Endothelial cell of umbilical vein (primary cell): ENCODE measurements at regions of chr1 and their contacts with region 1.

Region 1: GRCh38 chr1:160098852-160099561 is 588 bp upstream of the IGSF8 start:
- DNase-seq: peak; percentile 91
- H3K4me3 ChIP-seq: peak overlapping the region; percentile 63 to 82 (median 79)
- H3K27ac ChIP-seq: peak overlapping the region; percentile 36
- H3K4me1 ChIP-seq: peaks cover 7% of the 10 kb centered on the region
- H3K27me3 ChIP-seq: peaks cover 14 to 16% of the 10 kb centered on the region in 2 experiments
- CTCF ChIP-seq: no peak
- POLR2A ChIP-seq: no peak

Region 2: DNA sequence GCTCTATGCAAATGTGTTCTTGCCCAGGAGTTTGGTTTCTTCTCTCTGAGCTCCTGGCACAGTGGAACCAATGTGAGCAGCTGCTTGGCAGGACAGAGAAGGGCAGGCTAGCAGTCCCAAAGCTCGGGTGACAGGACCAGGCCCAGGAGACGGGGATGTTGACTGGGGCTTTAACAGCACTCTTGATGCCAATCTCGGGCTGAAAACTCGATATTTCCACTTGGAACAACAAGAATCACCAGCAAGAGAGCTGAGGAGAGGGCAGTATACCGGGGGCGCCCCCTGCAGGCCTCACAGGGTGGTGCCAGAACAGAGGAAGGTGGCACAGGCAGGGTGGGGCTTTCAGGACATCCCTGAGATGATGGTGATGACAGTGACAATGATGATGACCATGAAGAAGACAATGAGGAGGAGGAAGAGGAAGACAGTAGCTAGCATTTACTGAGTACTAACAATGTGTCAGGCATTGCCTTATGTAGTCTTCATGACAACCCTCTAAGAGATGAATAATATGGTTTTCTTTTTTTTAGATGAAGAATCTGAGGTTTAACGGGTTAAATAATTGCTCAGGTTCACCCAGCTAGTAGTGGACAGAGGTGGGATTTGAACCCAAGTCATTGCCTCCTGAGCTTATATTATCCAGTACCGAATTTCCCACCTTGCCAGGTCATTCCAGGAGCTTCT is 20.4 kb before region 1 on chr1:
- CTCF ChIA-PET with region 1: interaction called, 16 read pairs
- POLR2A ChIA-PET with region 1: no interaction called
- dilution Hi-C with region 1: no loop called
- intact Hi-C with region 1: no loop called
- DNase-seq: peak; percentile 26
- H3K4me3 ChIP-seq: no peak overlapping the region
- H3K27ac ChIP-seq: no peak overlapping the region
- H3K4me1 ChIP-seq: no peaks in the 10 kb centered on the region
- H3K27me3 ChIP-seq: peaks cover 44 to 56% of the 10 kb centered on the region in 2 experiments
- CTCF ChIP-seq: peak; percentile 80 to 87
- POLR2A ChIP-seq: no peak

Region 3: GRCh38 chr1:160169553-160170399 is 70.8 kb after region 1 on chr1:
- CTCF ChIA-PET with region 1: no interaction called
- POLR2A ChIA-PET with region 1: no interaction called
- dilution Hi-C with region 1: no loop called
- intact Hi-C with region 1: no loop called
- DNase-seq: no peak
- H3K4me3 ChIP-seq: no peak overlapping the region
- H3K27ac ChIP-seq: no peak overlapping the region
- H3K4me1 ChIP-seq: no peaks in the 10 kb centered on the region
- H3K27me3 ChIP-seq: peaks cover 7 to 17% of the 10 kb centered on the region in 2 experiments
- CTCF ChIP-seq: no peak
- POLR2A ChIP-seq: no peak

Region 4: DNA sequence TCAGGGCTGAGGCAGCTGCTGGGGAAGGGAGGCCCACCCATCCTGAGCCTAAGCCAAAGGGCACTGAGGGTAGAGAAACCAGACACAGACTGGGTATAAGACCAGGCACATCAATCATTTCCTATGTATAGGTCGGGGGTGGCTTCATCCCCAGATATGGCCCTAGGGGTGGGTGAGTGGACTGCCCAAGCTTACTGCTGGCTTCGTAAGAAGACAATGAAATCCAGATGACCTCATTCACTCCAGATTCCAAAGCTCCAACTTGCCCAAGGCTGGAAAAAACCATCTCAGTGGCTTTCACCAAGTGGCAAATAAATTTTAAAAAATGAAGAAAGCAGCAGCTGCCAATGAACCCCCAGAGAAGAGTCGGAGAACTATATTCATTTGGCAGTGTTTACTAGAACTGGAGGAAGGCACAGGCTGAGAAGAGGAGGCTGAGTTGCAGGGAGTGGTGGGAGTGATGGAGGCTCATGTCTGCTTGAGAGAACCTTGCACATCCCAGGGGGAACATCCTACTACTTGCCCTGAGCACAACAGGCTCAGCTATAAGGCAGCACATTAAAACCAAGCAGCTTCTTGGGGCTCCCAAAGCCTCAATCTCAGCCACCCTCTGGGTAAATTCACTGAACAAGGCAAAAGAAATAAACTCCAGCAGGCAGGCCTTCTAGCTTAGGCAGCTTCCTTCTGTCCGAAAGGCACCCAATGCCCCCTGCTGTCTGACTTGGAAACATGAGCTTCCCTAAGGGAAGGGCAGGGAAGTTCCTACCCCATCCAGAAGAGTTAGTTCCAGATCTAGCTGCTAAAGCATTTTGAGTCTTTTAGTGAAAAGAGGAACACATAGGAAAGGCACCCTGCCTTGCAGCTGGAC is 120.3 kb after region 1 on chr1:
- CTCF ChIA-PET with region 1: interaction called, 105 read pairs
- POLR2A ChIA-PET with region 1: interaction called, 3 read pairs
- dilution Hi-C with region 1: no loop called
- intact Hi-C with region 1: loop called (anchors 1 kb)
- DNase-seq: peak; percentile 73
- H3K4me3 ChIP-seq: no peak overlapping the region
- H3K27ac ChIP-seq: peak overlapping the region; percentile 16
- H3K4me1 ChIP-seq: peaks cover 12% of the 10 kb centered on the region
- H3K27me3 ChIP-seq: no peaks in the 10 kb centered on the region
- CTCF ChIP-seq: peak; percentile 52 to 70
- POLR2A ChIP-seq: no peak

Region 5: GRCh38 chr1:160291248-160292220 is 192.5 kb after region 1 on chr1:
- CTCF ChIA-PET with region 1: interaction called, 141 read pairs
- POLR2A ChIA-PET with region 1: no interaction called
- dilution Hi-C with region 1: no loop called
- intact Hi-C with region 1: loop called (anchors 1 kb)
- DNase-seq: peak; percentile 76
- H3K4me3 ChIP-seq: no peak overlapping the region
- H3K27ac ChIP-seq: no peak overlapping the region
- H3K4me1 ChIP-seq: no peaks in the 10 kb centered on the region
- H3K27me3 ChIP-seq: no peaks in the 10 kb centered on the region
- CTCF ChIP-seq: peak; percentile 66 to 72
- POLR2A ChIP-seq: no peak

Region 6: GRCh38 chr1:160416369-160416768 is 317.4 kb after region 1 on chr1:
- CTCF ChIA-PET with region 1: interaction called, 10 read pairs
- POLR2A ChIA-PET with region 1: no interaction called
- dilution Hi-C with region 1: no loop called
- intact Hi-C with region 1: loop called (anchors 1 kb)
- DNase-seq: peak; percentile 31
- H3K4me3 ChIP-seq: no peak overlapping the region
- H3K27ac ChIP-seq: no peak overlapping the region
- H3K4me1 ChIP-seq: no peaks in the 10 kb centered on the region
- H3K27me3 ChIP-seq: peaks cover 23 to 35% of the 10 kb centered on the region in 2 experiments
- CTCF ChIP-seq: peak; percentile 47 to 56
- POLR2A ChIP-seq: no peak